AG04450 (cell line): ENCODE measurements at regions of chr6 and their contacts with region 1.

Region 1: DNA sequence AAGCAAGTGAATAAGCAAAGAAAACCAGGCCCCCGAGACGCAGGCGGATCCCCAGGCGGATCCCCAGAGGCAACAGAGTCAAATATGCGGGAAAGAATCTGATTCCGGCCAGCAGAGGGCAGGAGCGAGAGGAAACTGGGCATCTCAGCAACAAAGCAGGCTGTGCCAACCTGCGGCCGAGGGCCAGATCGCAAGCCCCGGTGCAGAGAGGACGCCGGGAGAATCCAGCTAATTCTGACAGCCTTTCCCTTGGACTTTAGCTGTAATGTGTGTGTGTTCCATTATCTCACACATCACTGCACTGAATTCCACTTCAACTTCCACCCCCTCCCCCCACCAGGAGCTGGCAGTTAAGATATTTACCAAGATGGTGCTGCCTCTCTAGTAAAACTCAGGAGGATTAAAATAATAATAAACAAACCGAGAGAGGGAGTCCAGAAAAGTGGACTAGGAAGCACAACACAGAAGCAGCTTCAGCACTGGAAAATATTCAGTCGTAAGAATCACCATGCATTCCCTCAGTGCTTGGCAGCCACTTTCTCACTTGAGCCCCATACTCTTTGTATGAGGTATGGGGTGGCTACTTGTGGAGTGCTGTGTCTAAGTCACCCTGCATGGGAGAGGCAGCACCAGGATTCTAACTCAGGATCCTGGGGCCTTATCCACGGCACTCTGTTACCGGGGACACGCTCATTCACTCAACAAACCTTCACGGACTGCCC is 66.2 kb upstream of the SNX9 start:
- DNase-seq: peak; percentile 57
- H3K4me3 ChIP-seq: peak overlapping the region; percentile 18
- H3K27ac ChIP-seq: no peak overlapping the region
- H3K27me3 ChIP-seq: no peaks in the 10 kb centered on the region
- CTCF ChIP-seq: peak; percentile 85

Region 2: DNA sequence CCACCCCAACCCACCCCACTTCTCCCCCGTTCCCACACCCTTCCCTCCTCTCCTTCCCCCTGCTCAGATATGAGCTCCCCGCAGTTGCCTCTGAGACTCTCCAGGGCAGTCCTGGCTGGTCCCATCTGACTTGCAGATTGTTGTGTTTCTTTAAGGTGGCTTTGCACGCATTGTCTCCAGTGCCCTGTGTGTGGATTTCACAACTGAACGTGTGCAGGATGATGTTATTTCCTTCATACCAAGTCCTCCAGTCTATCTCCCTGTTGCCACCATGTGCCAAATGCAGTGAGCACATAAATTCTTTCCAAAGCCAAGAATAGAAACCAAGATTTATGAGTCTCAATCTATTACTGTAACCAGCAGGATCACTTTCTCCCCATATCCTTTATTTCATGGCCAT is 512.7 kb before region 1 on chr6:
- CTCF ChIA-PET with region 1: no interaction called
- POLR2A ChIA-PET with region 1: no interaction called
- DNase-seq: no peak
- H3K4me3 ChIP-seq: no peak overlapping the region
- H3K27ac ChIP-seq: no peak overlapping the region
- H3K27me3 ChIP-seq: no peaks in the 10 kb centered on the region
- CTCF ChIP-seq: no peak

Region 3: GRCh38 chr6:157667211-157668008 is 89.5 kb before region 1 on chr6:
- CTCF ChIA-PET with region 1: interaction called, 21 read pairs
- POLR2A ChIA-PET with region 1: no interaction called
- DNase-seq: no peak
- H3K4me3 ChIP-seq: no peak overlapping the region
- H3K27ac ChIP-seq: no peak overlapping the region
- H3K27me3 ChIP-seq: no peaks in the 10 kb centered on the region
- CTCF ChIP-seq: peak; percentile 91

Region 4: GRCh38 chr6:157770946-157771345 is 14.1 kb after region 1 on chr6:
- CTCF ChIA-PET with region 1: interaction called, 14 read pairs
- POLR2A ChIA-PET with region 1: no interaction called
- DNase-seq: no peak
- H3K4me3 ChIP-seq: no peak overlapping the region
- H3K27ac ChIP-seq: no peak overlapping the region
- H3K27me3 ChIP-seq: no peaks in the 10 kb centered on the region
- CTCF ChIP-seq: no peak

Region 5: GRCh38 chr6:157808405-157808950 is 51.6 kb after region 1 on chr6:
- CTCF ChIA-PET with region 1: interaction called, 14 read pairs
- POLR2A ChIA-PET with region 1: no interaction called
- DNase-seq: no peak
- H3K4me3 ChIP-seq: no peak overlapping the region
- H3K27ac ChIP-seq: no peak overlapping the region
- H3K27me3 ChIP-seq: no peaks in the 10 kb centered on the region
- CTCF ChIP-seq: no peak

Region 6: DNA sequence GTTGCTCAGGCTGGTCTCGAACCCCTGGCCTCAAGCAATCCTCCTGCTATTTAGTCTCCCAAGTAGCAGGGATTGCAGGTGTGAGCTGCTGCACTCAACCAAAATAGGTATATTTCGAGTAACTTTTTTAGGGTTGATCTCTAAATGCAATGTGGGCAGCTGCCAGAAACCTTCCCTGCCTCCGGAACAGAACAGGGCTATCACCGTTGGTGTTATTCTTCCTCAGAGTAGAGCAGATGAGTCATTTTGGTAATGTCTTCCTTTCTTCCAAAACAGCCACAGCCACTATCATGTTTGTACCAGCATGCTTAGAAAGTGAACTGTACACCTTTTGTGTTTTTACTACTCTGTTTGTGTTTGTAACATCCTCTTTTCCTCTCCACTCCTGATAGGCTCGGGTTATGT is 110.3 kb after region 1 on chr6:
- CTCF ChIA-PET with region 1: interaction called, 97 read pairs
- POLR2A ChIA-PET with region 1: no interaction called
- DNase-seq: no peak
- H3K4me3 ChIP-seq: no peak overlapping the region
- H3K27ac ChIP-seq: peak overlapping the region; percentile 31
- H3K27me3 ChIP-seq: no peaks in the 10 kb centered on the region
- CTCF ChIP-seq: no peak

Region 7: GRCh38 chr6:157912326-157912725 is 155.5 kb after region 1 on chr6:
- CTCF ChIA-PET with region 1: interaction called, 12 read pairs
- POLR2A ChIA-PET with region 1: no interaction called
- DNase-seq: peak; percentile 74
- H3K4me3 ChIP-seq: no peak overlapping the region
- H3K27ac ChIP-seq: no peak overlapping the region
- H3K27me3 ChIP-seq: no peaks in the 10 kb centered on the region
- CTCF ChIP-seq: no peak